ENCODE measurements at regions of chr1 and their contacts with region 1.

Region 1: DNA sequence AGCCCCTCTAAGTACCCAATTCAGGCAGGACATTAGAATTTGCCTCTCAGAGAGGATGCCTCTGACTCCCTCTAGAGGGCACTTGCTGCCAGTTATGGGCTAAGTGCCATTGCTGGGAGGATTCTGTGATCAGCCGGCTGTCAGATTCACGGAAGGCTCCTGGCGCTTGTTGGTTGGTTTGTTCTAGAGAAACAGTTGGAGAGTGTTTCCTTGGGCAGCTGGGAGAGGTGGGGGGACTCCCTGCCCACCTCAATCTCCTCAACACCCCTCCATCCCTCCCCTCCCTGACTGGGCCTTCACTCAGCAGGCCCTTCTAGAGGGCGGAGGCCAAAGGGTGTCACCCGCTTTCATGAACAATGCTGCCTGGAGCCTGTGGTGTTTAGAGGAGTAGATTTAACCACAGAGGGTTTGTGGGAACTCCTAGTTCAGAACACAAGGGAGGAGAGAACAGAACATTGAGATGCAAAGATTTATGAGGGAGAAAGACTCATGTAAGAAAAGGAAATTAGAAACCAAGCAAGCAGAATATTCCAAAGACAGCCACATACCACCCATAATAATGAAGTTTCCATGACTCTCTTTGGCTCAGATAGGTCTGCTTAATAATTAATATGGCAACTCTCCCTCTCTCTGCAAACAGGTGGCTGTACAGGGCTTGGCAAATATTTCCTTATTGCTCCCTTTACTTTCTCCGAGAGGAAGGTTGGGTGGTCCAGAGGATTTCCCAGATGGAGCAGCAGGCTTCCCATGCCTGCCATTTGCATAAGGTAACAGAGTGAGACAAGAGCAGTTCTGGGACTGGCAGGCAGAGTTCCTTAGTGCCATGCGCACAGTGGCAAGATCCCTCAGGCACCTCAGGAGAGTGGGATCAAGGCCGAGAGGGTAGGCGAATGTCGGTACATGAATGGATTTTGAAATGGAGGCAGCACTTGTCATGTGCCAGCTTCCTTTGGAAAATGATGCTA is 30.0 kb upstream of the ACP6 start:
- DNase-seq: peak; percentile 25 to 76 (median 61)
- ATAC-seq: peak; percentile 89
- H3K4me3 ChIP-seq: no peak overlapping the region
- H3K4me3 Mint-ChIP-seq: peak overlapping the region; percentile 19
- H3K27ac ChIP-seq: no peak overlapping the region
- H3K27ac Mint-ChIP-seq: peak overlapping the region; percentile 1
- H3K4me1 ChIP-seq: no peaks in the 10 kb centered on the region
- H3K4me1 Mint-ChIP-seq: peaks cover 6% of the 10 kb centered on the region
- H3K27me3 ChIP-seq: no peaks in the 10 kb centered on the region
- H3K27me3 Mint-ChIP-seq: peaks cover 17% of the 10 kb centered on the region
- CTCF ChIP-seq: peak; percentile 71

Region 2: DNA sequence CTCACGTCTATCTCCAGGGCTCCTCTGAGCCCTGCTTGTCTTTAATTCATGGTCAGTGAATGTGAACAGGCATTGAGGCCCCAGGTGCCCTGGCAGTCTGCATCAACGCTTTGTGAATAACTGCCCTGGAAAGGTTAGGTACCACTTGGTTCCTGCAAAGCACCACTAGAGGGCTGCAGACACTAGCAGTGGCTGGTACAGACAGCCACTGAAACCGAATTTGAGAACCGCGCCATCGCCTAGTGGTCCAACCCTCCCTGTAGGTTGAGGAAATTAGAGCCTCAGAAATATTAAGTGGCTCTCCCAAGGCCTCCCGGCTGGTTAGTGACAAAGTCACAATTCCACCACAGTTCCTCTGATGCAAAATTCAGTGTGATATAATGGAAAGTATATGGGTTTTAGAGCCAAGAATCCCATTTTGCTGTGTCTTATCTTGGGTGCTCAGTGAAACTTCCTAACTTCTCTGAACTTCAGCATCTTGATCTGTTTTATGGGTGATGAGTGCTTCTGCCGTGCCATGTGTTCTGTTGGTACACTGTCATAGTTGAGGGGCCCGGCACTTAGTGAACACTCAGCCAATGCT is 205.2 kb before region 1 on chr1:
- CTCF ChIA-PET with region 1: interaction called, 8 read pairs
- POLR2A ChIA-PET with region 1: no interaction called
- intact Hi-C with region 1: loop called (anchors 1 kb)
- DNase-seq: peak; percentile 31 to 82 (median 72)
- ATAC-seq: peak; percentile 96
- H3K4me3 ChIP-seq: no peak overlapping the region
- H3K4me3 Mint-ChIP-seq: no peak overlapping the region
- H3K27ac ChIP-seq: no peak overlapping the region
- H3K27ac Mint-ChIP-seq: no peak overlapping the region
- H3K4me1 ChIP-seq: no peaks in the 10 kb centered on the region
- H3K4me1 Mint-ChIP-seq: peaks cover 4% of the 10 kb centered on the region
- H3K27me3 ChIP-seq: no peaks in the 10 kb centered on the region
- H3K27me3 Mint-ChIP-seq: peaks cover 9% of the 10 kb centered on the region
- CTCF ChIP-seq: peak; percentile 96

Region 3: GRCh38 chr1:147509786-147510395 is 190.4 kb before region 1 on chr1:
- CTCF ChIA-PET with region 1: no interaction called
- POLR2A ChIA-PET with region 1: no interaction called
- intact Hi-C with region 1: loop called (anchors 1 to 5 kb)
- DNase-seq: no peak
- ATAC-seq: no peak
- H3K4me3 ChIP-seq: no peak overlapping the region
- H3K4me3 Mint-ChIP-seq: no peak overlapping the region
- H3K27ac ChIP-seq: no peak overlapping the region
- H3K27ac Mint-ChIP-seq: no peak overlapping the region
- H3K4me1 ChIP-seq: no peaks in the 10 kb centered on the region
- H3K4me1 Mint-ChIP-seq: no peaks in the 10 kb centered on the region
- H3K27me3 ChIP-seq: no peaks in the 10 kb centered on the region
- H3K27me3 Mint-ChIP-seq: peaks cover 5% of the 10 kb centered on the region
- CTCF ChIP-seq: no peak

Region 4: GRCh38 chr1:147515046-147515869 is 185.1 kb before region 1 on chr1:
- CTCF ChIA-PET with region 1: no interaction called
- POLR2A ChIA-PET with region 1: no interaction called
- intact Hi-C with region 1: loop called (anchors 1 to 5 kb)
- DNase-seq: peak in 2 of 9 experiments; percentile 47 to 60
- ATAC-seq: peak; percentile 65
- H3K4me3 ChIP-seq: no peak overlapping the region
- H3K4me3 Mint-ChIP-seq: no peak overlapping the region
- H3K27ac ChIP-seq: no peak overlapping the region
- H3K27ac Mint-ChIP-seq: no peak overlapping the region
- H3K4me1 ChIP-seq: no peaks in the 10 kb centered on the region
- H3K4me1 Mint-ChIP-seq: peaks cover 4% of the 10 kb centered on the region
- H3K27me3 ChIP-seq: no peaks in the 10 kb centered on the region
- H3K27me3 Mint-ChIP-seq: peaks cover 9% of the 10 kb centered on the region
- CTCF ChIP-seq: peak; percentile 33

Region 5: DNA sequence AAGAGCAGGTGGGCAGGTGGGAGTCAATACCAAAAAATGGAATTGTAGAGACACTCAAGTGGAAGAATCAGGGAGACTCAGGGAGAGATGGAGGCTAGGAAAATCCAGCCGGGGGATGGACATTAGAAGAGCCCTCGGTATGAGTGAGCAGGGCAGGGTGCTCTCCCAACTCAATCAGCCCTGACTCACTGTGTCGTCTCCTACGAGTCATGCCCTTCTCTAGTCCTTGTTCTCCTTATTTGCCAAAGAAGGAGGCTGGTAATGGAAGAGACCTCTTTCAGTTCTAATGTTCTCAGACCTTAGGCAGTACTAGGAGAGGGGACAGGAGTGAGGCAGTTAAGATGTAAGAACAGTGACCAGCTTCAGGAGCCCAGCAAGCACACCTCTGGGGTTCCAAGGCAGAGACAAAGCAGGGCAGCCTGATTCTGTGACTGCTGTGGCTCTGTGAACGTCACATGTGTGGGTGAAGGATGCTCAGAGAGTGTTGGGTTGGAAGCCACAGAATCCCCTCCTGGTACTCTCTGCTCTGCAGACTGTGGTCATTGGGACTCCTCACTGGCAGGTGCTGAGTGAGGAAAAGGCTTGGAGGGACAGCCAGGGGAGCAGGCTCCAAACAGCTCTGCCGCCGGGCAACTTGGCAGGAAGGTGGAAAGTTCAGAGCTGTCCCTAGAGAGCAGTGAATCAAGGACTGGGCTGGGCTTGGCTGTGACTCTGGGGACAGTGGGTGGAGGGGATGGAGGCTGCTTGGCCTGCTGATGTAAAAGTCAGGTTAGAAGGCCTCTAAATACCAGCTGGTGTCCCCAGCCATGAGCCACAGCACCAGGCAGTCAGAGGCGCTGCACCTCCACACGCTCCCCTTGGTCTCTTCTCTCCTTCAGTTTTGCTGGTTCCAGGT is 71.2 kb after region 1 on chr1:
- CTCF ChIA-PET with region 1: no interaction called
- POLR2A ChIA-PET with region 1: no interaction called
- intact Hi-C with region 1: no loop called
- DNase-seq: no peak
- ATAC-seq: no peak
- H3K4me3 ChIP-seq: no peak overlapping the region
- H3K4me3 Mint-ChIP-seq: no peak overlapping the region
- H3K27ac ChIP-seq: no peak overlapping the region
- H3K27ac Mint-ChIP-seq: no peak overlapping the region
- H3K4me1 ChIP-seq: no peaks in the 10 kb centered on the region
- H3K4me1 Mint-ChIP-seq: peaks cover 4% of the 10 kb centered on the region
- H3K27me3 ChIP-seq: peaks cover 0 to 2% of the 10 kb centered on the region in 2 experiments
- H3K27me3 Mint-ChIP-seq: peaks cover 30% of the 10 kb centered on the region
- CTCF ChIP-seq: no peak